ENCODE measurements at regions of chr1 and their contacts with region 1.

Region 1: GRCh38 chr1:2044510-2045319 is 5.5 kb upstream of the PRKCZ start:
- DNase-seq: no peak
- ATAC-seq: peak; percentile 69
- H3K4me3 ChIP-seq: peak overlapping the region; percentile 30 to 41
- H3K27ac ChIP-seq: no peak overlapping the region
- H3K4me1 ChIP-seq: peaks cover 4% of the 10 kb centered on the region; the same call in 1 of the 2 replicates
- H3K27me3 ChIP-seq: no peaks in the 10 kb centered on the region
- CTCF ChIP-seq: peak; percentile 99

Region 2: DNA sequence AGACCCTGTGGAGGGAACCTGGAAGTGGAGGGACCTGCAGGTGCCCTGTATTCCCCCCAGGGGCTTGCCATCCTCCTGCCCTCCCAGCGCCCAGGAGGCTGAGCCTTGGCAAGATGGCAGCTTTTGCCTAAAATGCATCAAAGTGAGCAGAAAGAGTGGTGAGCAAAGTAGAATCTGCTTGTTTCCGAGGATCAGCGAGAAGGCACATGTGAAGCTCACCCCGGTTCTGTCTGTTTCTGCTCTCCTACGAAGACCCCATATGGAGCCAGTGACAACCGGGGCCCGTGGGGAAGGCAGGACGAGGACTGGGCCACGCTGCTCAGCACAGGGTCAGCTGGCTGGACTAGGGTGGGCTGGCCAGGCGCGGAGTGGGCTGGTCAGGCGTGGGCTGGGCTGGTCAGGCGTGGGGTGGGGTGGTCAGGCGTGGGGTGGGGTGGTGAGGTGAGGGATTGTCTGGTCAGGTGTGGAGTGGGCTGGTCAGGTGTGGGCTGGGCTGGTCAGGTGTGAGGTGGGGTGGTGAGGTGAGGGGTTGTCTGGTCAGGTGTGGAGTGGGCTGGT is 439.6 kb before region 1 on chr1:
- CTCF ChIA-PET with region 1: no interaction called
- POLR2A ChIA-PET with region 1: no interaction called
- in situ Hi-C with region 1: no loop called
- intact Hi-C with region 1: no loop called
- DNase-seq: no peak
- ATAC-seq: peak; percentile 17; the same call in 1 of the 2 replicates
- H3K4me3 ChIP-seq: no peak overlapping the region
- H3K27ac ChIP-seq: no peak overlapping the region
- H3K4me1 ChIP-seq: peaks cover 3% of the 10 kb centered on the region; the same call in 1 of the 2 replicates
- H3K27me3 ChIP-seq: no peaks in the 10 kb centered on the region
- CTCF ChIP-seq: no peak

Region 3: GRCh38 chr1:1841575-1841995 is 203.1 kb before region 1 on chr1:
- CTCF ChIA-PET with region 1: no interaction called
- POLR2A ChIA-PET with region 1: no interaction called
- in situ Hi-C with region 1: no loop called
- intact Hi-C with region 1: no loop called
- DNase-seq: no peak
- ATAC-seq: peak; percentile 43; the same call in 1 of the 2 replicates
- H3K4me3 ChIP-seq: no peak overlapping the region
- H3K27ac ChIP-seq: no peak overlapping the region
- H3K4me1 ChIP-seq: peaks cover 9% of the 10 kb centered on the region; the same call in 1 of the 2 replicates
- H3K27me3 ChIP-seq: no peaks in the 10 kb centered on the region
- CTCF ChIP-seq: no peak

Region 4: DNA sequence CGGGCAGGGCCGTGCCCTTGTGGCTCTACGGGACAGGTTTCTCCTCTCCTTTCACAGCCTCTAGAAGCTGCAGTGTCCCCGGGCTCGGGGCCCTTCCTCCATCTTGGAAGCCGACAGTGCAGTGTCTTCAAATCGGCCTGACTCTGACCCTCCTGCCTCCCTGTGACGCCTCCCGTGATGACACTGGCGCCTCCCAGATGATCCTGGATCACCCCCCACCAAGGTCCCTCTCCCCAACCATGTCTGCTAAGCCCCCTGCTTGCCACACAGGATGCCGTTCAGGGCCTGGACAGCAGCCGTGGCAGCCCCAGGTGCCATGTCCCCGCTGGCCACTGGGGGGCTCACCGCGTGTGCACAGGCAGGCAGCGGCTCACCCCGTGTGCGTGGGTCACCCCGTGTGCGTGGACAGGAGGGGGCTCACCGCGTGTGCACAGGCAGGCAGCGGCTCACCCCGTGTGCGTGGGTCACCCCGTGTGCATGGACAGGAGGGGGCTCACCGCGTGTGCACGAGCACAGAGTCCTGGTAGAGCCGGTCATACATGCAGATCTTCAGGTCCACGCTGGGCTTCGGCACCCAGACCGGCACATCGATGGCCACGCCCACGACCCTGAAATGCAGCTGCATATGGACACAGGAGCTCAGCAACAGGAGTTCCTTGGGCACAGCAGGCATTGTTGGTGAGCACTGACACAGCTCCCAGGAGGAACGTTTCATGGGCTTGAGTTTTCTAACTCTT is 100.7 kb before region 1 on chr1:
- CTCF ChIA-PET with region 1: interaction called, 6 read pairs
- POLR2A ChIA-PET with region 1: interaction called, 3 read pairs
- in situ Hi-C with region 1: no loop called
- intact Hi-C with region 1: loop called (anchors 5 kb)
- DNase-seq: no peak
- ATAC-seq: peak; percentile 93
- H3K4me3 ChIP-seq: peak overlapping the region; percentile 25 to 51
- H3K27ac ChIP-seq: no peak overlapping the region
- H3K4me1 ChIP-seq: no peaks in the 10 kb centered on the region; the same call in 1 of the 2 replicates
- H3K27me3 ChIP-seq: no peaks in the 10 kb centered on the region
- CTCF ChIP-seq: peak; percentile 98

Region 5: DNA sequence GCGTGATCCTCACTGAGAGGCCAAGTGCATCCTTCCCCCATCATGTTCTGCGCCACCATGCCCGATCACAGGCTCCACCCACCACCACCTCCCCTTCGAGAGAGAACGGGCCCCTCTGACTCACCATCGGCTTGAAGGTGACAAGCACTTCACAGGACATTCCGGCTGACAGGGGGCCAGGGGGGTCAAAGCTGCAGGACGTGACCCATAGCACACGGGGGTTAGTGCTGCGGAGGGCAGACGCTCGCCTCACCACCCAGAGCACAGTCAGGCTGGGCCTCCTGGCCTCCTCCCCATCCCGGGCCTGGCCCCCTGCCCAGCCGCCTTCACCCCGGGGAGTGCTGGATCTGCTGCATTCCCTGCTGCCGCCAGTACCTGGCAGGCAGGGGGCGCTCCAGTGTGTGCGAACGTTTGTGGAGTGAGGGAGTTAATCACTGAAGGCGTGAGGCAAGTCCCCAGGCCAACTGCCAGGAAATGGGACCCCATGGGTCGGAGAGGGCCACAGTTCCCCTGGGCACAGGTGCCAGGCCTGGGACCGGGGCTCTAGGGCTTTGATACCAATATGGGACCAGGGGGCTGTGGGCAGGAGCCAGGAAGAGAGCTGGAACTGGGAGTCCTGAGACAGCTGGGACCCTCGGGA is 84.8 kb before region 1 on chr1:
- CTCF ChIA-PET with region 1: interaction called, 31 read pairs
- POLR2A ChIA-PET with region 1: no interaction called
- in situ Hi-C with region 1: no loop called
- intact Hi-C with region 1: loop called (anchors 2 kb)
- DNase-seq: no peak
- ATAC-seq: peak; percentile 93
- H3K4me3 ChIP-seq: peak overlapping the region in 1 of 2 experiments; percentile 22; a peak in 1 of 4 replicates
- H3K27ac ChIP-seq: no peak overlapping the region
- H3K4me1 ChIP-seq: peaks cover 10% of the 10 kb centered on the region
- H3K27me3 ChIP-seq: no peaks in the 10 kb centered on the region
- CTCF ChIP-seq: peak; percentile 96

Region 6: GRCh38 chr1:2061065-2061778 is 16.5 kb after region 1 on chr1:
- CTCF ChIA-PET with region 1: interaction called, 10 read pairs
- POLR2A ChIA-PET with region 1: no interaction called
- in situ Hi-C with region 1: no loop called
- intact Hi-C with region 1: no loop called
- DNase-seq: no peak
- ATAC-seq: no peak
- H3K4me3 ChIP-seq: no peak overlapping the region
- H3K27ac ChIP-seq: no peak overlapping the region
- H3K4me1 ChIP-seq: no peaks in the 10 kb centered on the region
- H3K27me3 ChIP-seq: no peaks in the 10 kb centered on the region
- CTCF ChIP-seq: no peak